Activated B cell treated with CpG ODN at 0.5 μM for 24 hours (primary cell): ENCODE measurements at regions of chr3 and their contacts with region 1.

Region 1: DNA sequence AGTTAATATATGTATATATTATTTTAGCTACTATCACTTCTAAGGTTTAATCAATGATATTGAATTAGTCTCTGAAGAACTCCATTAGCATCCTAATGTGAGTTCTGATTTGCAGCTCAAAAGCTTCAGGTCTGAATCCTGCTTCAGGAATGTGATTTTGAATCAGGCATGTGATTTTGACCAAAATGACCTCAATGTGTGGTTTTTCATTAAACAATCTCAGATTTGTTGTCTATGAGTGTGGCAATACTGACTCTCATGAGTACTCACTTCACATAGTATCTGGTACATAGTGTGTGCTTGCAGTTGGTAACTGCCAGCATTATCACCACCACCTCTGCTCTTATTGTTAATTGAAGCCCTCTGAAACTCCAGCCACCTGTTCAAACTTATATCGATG is 251.0 kb downstream of the KCNH8 start:
- DNase-seq: no peak
- ATAC-seq: no peak
- H3K4me3 Mint-ChIP-seq: no peak overlapping the region
- H3K27ac Mint-ChIP-seq: no peak overlapping the region
- H3K4me1 Mint-ChIP-seq: peaks cover 37% of the 10 kb centered on the region
- H3K27me3 Mint-ChIP-seq: no peaks in the 10 kb centered on the region
- CTCF ChIP-seq: no peak

Region 2: DNA sequence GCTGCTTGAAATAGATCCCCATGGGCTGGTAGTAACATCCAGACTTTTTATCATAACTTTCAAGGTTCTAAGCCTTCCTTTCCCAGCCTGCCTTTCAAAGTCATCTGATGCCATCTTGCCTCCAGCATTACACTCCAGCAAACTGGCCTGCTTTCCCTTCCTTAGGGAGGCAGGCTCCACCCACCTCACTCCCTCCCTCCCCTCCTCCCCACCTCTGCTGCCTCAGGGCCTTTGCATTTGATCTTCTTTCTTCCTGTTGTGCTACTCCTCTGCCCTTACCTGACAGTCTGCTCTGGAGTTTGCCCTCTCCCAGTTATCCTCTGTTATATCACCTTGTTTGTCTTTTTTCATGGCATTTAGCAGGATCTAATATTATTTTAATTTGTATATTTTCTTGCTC is 68.4 kb after region 1 on chr3:
- CTCF ChIA-PET with region 1: no interaction called
- POLR2A ChIA-PET with region 1: interaction called, 14 read pairs
- intact Hi-C with region 1: no loop called
- DNase-seq: no peak
- ATAC-seq: no peak
- H3K4me3 Mint-ChIP-seq: no peak overlapping the region
- H3K27ac Mint-ChIP-seq: no peak overlapping the region
- H3K4me1 Mint-ChIP-seq: peaks cover 15% of the 10 kb centered on the region
- H3K27me3 Mint-ChIP-seq: no peaks in the 10 kb centered on the region
- CTCF ChIP-seq: no peak